Sciatic nerve (tissue), 2 donors: ENCODE measurements at regions of chr3 and their contacts with region 1.

Region 1: GRCh38 chr3:190780524-190780923 is 82.0 kb downstream of the GMNC start:
- DNase-seq: no peak
- ATAC-seq: no peak

Region 2: GRCh38 chr3:189369636-189370035 is 1410.9 kb before region 1 on chr3:
- intact Hi-C with region 1: no loop called
- DNase-seq: no peak
- ATAC-seq: no peak

Region 3: DNA sequence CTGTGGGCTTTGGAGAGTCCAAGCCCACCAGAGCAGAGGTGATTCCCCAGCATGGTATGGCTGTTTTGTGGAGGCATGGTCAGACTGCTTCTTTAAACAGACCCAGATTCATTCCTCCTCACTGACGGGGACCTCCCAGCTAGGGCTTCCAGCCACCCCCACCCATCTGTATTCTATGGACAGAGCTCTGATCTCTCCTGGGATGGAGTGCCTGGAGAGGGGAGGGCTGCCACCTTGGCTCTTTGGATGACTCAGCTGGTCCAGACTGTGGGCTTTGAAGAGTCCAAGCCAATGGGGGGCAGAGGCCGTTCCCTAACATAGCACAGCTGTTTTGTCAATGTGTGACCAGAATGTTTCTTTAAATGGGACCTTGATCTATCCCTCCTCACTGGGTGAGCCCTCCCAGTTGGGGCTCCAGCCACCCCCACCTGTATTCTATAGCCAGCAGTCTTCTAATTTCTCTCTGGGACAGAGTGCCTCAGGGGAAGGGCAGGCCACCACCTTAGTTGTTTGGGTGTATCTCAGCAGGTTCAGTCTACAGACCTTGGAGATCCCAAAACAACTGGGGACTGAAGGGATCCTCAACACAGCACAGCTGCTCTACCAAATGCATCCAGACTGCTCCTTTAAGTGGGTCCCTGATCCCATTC is 296.5 kb after region 1 on chr3:
- intact Hi-C with region 1: loop called (anchors 2 kb)
- DNase-seq: no peak
- ATAC-seq: no peak